AG04450 (cell line): ENCODE measurements at regions of chr1 and their contacts with region 1.

Region 1: DNA sequence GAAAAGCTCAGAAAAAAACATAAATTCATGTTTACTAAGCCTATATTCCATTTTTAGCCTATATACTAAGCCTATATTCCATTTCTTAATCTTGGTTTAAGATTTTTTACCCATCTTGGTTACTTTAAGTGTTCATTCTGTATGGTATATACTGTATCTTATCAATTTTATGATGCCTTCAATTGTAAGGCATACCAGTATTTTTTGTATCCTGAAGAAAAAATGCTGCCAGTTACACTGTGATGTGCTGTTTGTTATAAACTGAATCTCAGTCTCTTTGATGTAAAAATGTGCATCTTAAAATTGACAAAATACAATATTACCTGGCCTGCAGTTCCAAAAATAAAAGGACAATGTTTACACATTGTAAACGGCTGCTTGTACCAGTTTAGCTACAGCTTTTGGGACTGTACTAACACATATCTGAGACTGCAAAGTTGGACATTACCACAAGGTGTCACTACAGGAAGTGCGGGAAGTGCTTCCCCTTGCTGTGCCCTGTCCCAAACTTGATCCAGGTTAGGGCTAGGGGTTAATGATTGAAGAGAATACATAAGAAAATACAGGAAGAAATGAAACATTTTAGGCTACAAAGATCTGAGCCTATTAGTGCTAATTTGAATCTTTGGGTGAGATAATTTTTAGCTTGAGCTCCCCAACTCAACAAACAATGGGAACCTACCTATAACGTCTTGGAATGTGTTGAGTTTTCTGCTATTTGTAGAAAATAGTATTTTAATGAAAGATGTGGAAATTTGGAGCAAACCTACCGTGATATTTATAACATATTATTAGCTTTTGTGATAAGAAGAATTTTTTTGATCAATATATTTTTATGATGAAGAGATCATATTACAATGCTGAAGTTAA is 108.9 kb downstream of the LBR start:
- DNase-seq: no peak
- H3K4me3 ChIP-seq: no peak overlapping the region
- H3K27ac ChIP-seq: no peak overlapping the region
- H3K27me3 ChIP-seq: no peaks in the 10 kb centered on the region
- CTCF ChIP-seq: peak; percentile 86

Region 2: GRCh38 chr1:225242623-225243022 is 76.3 kb before region 1 on chr1:
- CTCF ChIA-PET with region 1: no interaction called
- POLR2A ChIA-PET with region 1: no interaction called
- DNase-seq: no peak
- H3K4me3 ChIP-seq: no peak overlapping the region
- H3K27ac ChIP-seq: no peak overlapping the region
- H3K27me3 ChIP-seq: peaks cover 2% of the 10 kb centered on the region
- CTCF ChIP-seq: no peak

Region 3: DNA sequence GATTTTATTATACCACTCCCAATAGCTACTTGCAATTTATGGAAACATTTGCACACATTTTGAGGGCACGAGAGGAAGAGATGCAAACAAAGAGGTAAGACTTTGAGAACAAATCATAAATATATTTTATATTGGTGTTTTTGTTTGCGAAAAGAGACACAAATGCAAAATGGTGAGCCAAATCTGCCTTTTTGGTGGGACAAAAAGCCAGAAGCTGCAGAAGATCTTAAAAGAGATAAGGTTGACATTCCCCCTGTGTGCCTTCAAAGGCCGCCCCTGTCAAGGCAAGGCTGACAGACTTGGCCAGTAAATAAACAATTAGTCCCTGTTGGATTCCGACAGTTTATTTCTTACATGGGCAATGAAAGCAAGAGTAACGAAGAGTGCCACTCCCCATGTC is 13.9 kb before region 1 on chr1:
- CTCF ChIA-PET with region 1: interaction called, 31 read pairs
- POLR2A ChIA-PET with region 1: no interaction called
- DNase-seq: no peak
- H3K4me3 ChIP-seq: no peak overlapping the region
- H3K27ac ChIP-seq: no peak overlapping the region
- H3K27me3 ChIP-seq: peaks cover 6% of the 10 kb centered on the region
- CTCF ChIP-seq: no peak

Region 4: DNA sequence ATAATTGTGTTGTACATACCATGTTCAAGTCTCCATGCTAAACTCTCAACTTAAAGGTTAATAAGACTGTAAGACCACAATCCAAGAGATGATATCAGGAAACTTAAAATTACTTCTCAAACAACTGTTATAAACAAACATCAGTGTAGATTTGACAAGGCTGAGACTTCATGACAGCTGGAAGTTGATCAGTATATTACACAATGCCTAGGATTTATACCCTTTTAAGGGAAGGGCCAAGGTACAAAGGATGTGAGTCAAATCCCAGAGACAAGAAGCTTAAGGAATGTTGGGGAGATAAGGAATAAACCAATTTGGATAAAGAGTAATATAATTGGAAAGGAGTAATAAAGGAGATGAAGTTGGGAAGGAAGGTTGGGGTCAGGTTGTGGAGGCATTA is 10.1 kb after region 1 on chr1:
- CTCF ChIA-PET with region 1: interaction called, 12 read pairs
- POLR2A ChIA-PET with region 1: interaction called, 4 read pairs
- DNase-seq: no peak
- H3K4me3 ChIP-seq: no peak overlapping the region
- H3K27ac ChIP-seq: no peak overlapping the region
- H3K27me3 ChIP-seq: no peaks in the 10 kb centered on the region
- CTCF ChIP-seq: no peak

Region 5: GRCh38 chr1:225987491-225988316 is 668.8 kb after region 1 on chr1:
- CTCF ChIA-PET with region 1: interaction called, 21 read pairs
- POLR2A ChIA-PET with region 1: no interaction called
- DNase-seq: peak; percentile 20
- H3K4me3 ChIP-seq: no peak overlapping the region
- H3K27ac ChIP-seq: no peak overlapping the region
- H3K27me3 ChIP-seq: no peaks in the 10 kb centered on the region
- CTCF ChIP-seq: peak; percentile 79